Activated CD4-positive, alpha-beta memory T cell treated with anti-CD3 and anti-CD28 coated beads for 36 hours (primary cell): ENCODE measurements at regions of chr5 and their contacts with region 1.

Region 1: GRCh38 chr5:69083412-69083811 is 10.4 kb upstream of the SLC30A5 start:
- DNase-seq: no peak
- H3K4me3 Mint-ChIP-seq: no peak overlapping the region
- H3K27ac Mint-ChIP-seq: no peak overlapping the region
- H3K4me1 Mint-ChIP-seq: peaks cover 5% of the 10 kb centered on the region
- H3K27me3 Mint-ChIP-seq: no peaks in the 10 kb centered on the region

Region 2: GRCh38 chr5:68446487-68446894 is 636.9 kb before region 1 on chr5:
- CTCF ChIA-PET with region 1: no interaction called
- POLR2A ChIA-PET with region 1: no interaction called
- intact Hi-C with region 1: no loop called
- DNase-seq: no peak
- H3K4me3 Mint-ChIP-seq: no peak overlapping the region
- H3K27ac Mint-ChIP-seq: no peak overlapping the region
- H3K4me1 Mint-ChIP-seq: peaks cover 11% of the 10 kb centered on the region
- H3K27me3 Mint-ChIP-seq: no peaks in the 10 kb centered on the region

Region 3: DNA sequence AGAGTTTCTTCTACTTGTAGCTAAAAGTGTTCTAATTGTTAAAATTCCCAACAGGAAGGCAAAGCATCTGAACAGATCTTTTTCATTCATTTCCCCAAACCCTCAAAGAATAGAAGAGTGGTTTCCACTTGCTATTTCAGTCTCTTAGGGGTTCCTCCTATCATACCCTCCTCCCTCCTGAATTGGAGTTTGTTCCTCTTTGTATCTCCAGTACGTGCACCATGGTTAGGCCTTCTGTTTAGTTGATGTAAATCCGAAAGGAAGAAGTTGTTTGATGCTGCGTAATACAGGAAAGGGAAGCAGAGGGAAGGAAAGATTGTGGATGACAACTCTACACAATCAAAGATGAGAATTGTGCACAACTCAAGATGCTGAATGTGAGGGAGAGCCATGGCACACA is 564.3 kb before region 1 on chr5:
- CTCF ChIA-PET with region 1: no interaction called
- POLR2A ChIA-PET with region 1: no interaction called
- intact Hi-C with region 1: no loop called
- DNase-seq: no peak
- H3K4me3 Mint-ChIP-seq: no peak overlapping the region
- H3K27ac Mint-ChIP-seq: no peak overlapping the region
- H3K4me1 Mint-ChIP-seq: no peaks in the 10 kb centered on the region
- H3K27me3 Mint-ChIP-seq: no peaks in the 10 kb centered on the region

Region 4: DNA sequence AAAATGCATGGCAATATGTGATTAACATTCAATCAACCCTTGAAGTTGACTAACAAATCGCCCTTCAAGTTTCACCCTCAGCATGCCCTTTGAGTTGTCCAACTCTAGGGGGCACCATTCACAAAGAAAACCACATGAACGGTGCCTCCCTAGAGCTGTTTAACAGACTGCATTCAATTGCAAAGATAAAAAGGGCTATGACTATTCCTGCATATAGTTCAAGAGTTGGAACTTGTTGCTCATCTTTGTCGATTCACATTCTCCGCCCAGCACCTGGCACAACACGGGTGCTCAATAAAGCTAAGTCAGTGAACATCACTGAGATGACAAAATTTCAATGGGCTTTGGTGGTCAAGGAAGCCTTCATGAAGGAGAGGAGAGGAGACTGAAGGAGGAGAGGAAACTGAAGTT is 59.2 kb before region 1 on chr5:
- CTCF ChIA-PET with region 1: interaction called, 3 read pairs
- POLR2A ChIA-PET with region 1: no interaction called
- intact Hi-C with region 1: loop called (anchors 10 kb)
- DNase-seq: peak; percentile 20
- H3K4me3 Mint-ChIP-seq: no peak overlapping the region
- H3K27ac Mint-ChIP-seq: peak overlapping the region; percentile 57
- H3K4me1 Mint-ChIP-seq: no peaks in the 10 kb centered on the region
- H3K27me3 Mint-ChIP-seq: peaks cover 6% of the 10 kb centered on the region

Region 5: DNA sequence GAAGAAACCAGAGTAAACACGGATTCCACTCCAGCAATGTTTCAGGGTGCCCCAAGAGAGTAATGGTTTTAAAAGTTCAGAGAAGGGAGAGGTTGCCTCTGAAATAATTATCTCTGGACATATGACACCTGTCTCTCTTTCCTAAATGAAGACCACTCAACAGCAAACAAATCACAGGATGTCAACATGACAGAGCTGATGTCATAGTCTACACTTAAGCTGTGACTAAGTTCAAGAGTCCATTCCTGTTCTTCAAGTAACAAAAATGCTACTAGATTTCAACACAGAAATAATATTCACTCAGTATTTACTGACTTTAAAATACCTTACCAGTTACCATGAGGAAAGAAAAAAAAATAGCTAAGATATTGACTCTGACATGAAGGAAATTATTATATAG is 34.3 kb before region 1 on chr5:
- CTCF ChIA-PET with region 1: no interaction called
- POLR2A ChIA-PET with region 1: no interaction called
- intact Hi-C with region 1: no loop called
- DNase-seq: no peak
- H3K4me3 Mint-ChIP-seq: no peak overlapping the region
- H3K27ac Mint-ChIP-seq: no peak overlapping the region
- H3K4me1 Mint-ChIP-seq: no peaks in the 10 kb centered on the region
- H3K27me3 Mint-ChIP-seq: no peaks in the 10 kb centered on the region